Heart left ventricle (tissue), 16 donors: ENCODE measurements at regions of chr10 and their contacts with region 1.

Region 1: GRCh38 chr10:103859161-103860086 is 4.0 kb upstream of the SH3PXD2A start:
- DNase-seq: peak in 3 of 5 donors; percentile 47 to 67 (median 63)
- ATAC-seq: peak; percentile 57 to 75 (median 59)
- H3K4me3 ChIP-seq: no peak overlapping the region
- H3K27ac ChIP-seq: peak overlapping the region in 1 of 12 donors; percentile 10
- H3K4me1 ChIP-seq: peaks cover 0 to 29% (median 8%) of the 10 kb centered on the region in 12 donors
- H3K27me3 ChIP-seq: peaks cover 0 to 2% (median 0%) of the 10 kb centered on the region in 9 donors
- CTCF ChIP-seq: peak; percentile 57 to 85 (median 76)
- POLR2A ChIP-seq: no peak

Region 2: DNA sequence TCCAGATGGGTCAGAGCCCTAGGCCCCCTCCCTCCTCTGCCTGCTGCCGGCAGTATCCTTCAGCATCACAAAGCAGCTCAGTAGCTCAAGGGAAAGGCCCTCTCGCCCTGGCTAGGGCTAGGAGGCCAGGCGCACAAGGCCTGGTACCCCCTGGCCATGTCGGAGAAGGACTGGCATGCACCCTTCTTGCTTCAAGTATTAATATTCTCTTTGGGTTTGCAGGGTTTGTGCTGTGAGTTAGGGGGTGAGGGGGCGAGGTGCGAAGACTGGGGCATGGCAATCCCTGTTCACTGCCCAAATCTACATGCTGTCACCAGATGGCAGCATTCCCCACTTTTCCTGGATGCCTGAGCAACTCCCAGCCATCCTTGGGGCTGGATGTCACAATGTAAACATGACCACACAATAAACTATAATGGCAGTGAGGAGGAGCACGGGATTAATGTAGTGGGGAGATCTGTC is 260.7 kb before region 1 on chr10:
- intact Hi-C with region 1: loop called in 4 of 10 experiments (anchors 5 to 10 kb)
- DNase-seq: no peak
- ATAC-seq: peak; percentile 30 to 70 (median 48)
- H3K4me3 ChIP-seq: no peak overlapping the region
- H3K27ac ChIP-seq: no peak overlapping the region
- H3K4me1 ChIP-seq: peaks cover 0 to 28% (median 6%) of the 10 kb centered on the region in 12 donors
- H3K27me3 ChIP-seq: no peaks in the 10 kb centered on the region
- CTCF ChIP-seq: peak; percentile 35 to 73 (median 66)
- POLR2A ChIP-seq: no peak

Region 3: GRCh38 chr10:103618575-103619423 is 240.6 kb before region 1 on chr10:
- intact Hi-C with region 1: loop called in 1 of 10 experiments (anchors 10 kb)
- DNase-seq: peak; percentile 72 to 87 (median 76)
- ATAC-seq: peak; percentile 32 to 69 (median 47)
- H3K4me3 ChIP-seq: no peak overlapping the region
- H3K27ac ChIP-seq: peak overlapping the region in 11 of 12 donors; percentile 29 to 73 (median 64)
- H3K4me1 ChIP-seq: peaks cover 8 to 92% (median 74%) of the 10 kb centered on the region in 12 donors
- H3K27me3 ChIP-seq: no peaks in the 10 kb centered on the region
- CTCF ChIP-seq: no peak
- POLR2A ChIP-seq: no peak

Region 4: GRCh38 chr10:103759100-103759781 is 100.2 kb before region 1 on chr10:
- intact Hi-C with region 1: loop called in 1 of 10 experiments (anchors 5 kb)
- DNase-seq: peak in 4 of 5 donors; percentile 77 to 84 (median 80)
- ATAC-seq: peak; percentile 85 to 92 (median 88)
- H3K4me3 ChIP-seq: peak overlapping the region in 1 of 12 donors; percentile 1
- H3K27ac ChIP-seq: peak overlapping the region; percentile 56 to 100 (median 94)
- H3K4me1 ChIP-seq: peaks cover 11 to 85% (median 69%) of the 10 kb centered on the region in 12 donors
- H3K27me3 ChIP-seq: no peaks in the 10 kb centered on the region
- CTCF ChIP-seq: no peak
- POLR2A ChIP-seq: peak in 1 of 2 donors; percentile 37

Region 5: DNA sequence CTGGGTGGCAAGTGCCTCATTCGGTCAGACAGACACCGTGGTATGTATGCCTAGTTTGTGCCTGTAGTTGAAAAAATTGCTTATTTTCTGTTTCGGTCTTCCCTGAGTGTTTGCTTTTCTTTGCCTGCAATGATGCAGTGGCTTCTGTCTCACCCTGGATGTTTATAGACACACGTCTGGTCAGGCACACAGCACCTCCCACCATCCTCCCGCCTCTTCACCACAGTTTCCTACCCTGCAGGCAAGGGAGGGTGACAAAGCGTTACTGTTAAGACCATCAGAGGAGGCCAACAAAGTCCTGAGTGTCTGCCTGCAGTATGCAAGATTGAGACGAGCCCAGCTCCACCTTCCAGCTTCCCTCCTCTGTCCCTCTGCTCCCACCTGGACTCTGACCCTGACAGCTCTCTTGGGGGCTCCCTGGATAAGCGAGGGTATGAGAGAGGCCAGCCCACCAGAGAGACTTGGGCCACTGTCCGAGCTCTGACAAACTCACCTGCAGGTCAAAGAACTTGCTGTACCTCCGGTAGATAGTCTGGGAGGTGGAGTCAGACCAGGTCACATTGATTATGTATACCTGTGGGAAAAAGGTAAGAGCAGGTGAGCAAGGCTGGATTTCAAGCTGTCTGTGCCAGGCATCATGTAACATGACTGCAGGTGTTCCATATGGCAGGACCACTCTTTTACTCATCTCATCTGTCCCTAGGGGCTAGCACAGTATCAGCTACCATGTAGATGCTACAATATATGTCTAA is 58.5 kb before region 1 on chr10:
- intact Hi-C with region 1: loop called in 1 of 10 experiments (anchors 10 kb)
- DNase-seq: no peak
- ATAC-seq: peak in 1 of 4 donors; percentile 13
- H3K4me3 ChIP-seq: no peak overlapping the region
- H3K27ac ChIP-seq: no peak overlapping the region
- H3K4me1 ChIP-seq: peaks cover 0 to 3% (median 0%) of the 10 kb centered on the region in 12 donors
- H3K27me3 ChIP-seq: no peaks in the 10 kb centered on the region
- CTCF ChIP-seq: no peak
- POLR2A ChIP-seq: no peak